OCI-LY7 (cell line): ENCODE measurements at regions of chr13 and their contacts with region 1.

Region 1: GRCh38 chr13:102845630-102846260 is at the start of gene ERCC5:
- DNase-seq: peak; percentile 90
- H3K4me3 ChIP-seq: peak within 1 kb of the TSS; percentile 99
- H3K27ac ChIP-seq: peak within 1 kb of the TSS; percentile 89
- H3K4me1 ChIP-seq: peaks cover 15% of the 10 kb centered on the region
- CTCF ChIP-seq: no peak
- total RNA-seq, gene ERCC5: 37.9 and 39.2 TPM in 2 replicates

Region 2: DNA sequence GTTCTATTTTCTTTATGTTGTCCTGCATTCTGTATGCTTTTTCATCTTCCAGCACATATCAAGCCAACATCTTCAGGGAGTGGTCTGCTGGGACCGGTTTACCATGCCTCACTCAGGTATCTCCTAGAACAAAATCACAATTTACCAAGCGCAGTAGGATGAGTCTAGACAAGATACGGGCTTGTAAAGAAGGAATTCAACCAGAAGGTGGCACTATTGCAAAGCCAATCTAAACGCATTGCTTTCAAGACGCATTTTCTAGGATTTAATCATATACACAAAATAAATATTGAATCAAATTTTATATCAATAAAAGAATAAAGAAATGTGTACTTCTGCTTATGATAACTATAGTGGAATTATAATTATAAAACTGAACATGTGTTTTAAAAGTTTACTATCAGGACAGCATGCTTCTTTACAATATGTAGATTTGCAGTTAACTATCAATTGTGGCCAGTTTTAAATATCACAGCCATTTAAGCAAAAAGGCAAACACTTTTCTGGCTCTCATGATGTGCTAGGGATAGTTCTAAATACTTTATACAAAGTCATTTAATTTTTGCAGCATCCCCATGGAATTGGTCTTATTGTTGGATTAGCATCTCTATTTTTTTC is 265.1 kb before region 1 on chr13:
- CTCF ChIA-PET with region 1: no interaction called
- POLR2A ChIA-PET with region 1: interaction called, 4 read pairs
- intact Hi-C with region 1: loop called (anchors 1 kb)
- DNase-seq: peak; percentile 59
- H3K4me3 ChIP-seq: no peak overlapping the region
- H3K27ac ChIP-seq: no peak overlapping the region
- H3K4me1 ChIP-seq: peaks cover 7% of the 10 kb centered on the region
- CTCF ChIP-seq: peak; percentile 81

Region 3: DNA sequence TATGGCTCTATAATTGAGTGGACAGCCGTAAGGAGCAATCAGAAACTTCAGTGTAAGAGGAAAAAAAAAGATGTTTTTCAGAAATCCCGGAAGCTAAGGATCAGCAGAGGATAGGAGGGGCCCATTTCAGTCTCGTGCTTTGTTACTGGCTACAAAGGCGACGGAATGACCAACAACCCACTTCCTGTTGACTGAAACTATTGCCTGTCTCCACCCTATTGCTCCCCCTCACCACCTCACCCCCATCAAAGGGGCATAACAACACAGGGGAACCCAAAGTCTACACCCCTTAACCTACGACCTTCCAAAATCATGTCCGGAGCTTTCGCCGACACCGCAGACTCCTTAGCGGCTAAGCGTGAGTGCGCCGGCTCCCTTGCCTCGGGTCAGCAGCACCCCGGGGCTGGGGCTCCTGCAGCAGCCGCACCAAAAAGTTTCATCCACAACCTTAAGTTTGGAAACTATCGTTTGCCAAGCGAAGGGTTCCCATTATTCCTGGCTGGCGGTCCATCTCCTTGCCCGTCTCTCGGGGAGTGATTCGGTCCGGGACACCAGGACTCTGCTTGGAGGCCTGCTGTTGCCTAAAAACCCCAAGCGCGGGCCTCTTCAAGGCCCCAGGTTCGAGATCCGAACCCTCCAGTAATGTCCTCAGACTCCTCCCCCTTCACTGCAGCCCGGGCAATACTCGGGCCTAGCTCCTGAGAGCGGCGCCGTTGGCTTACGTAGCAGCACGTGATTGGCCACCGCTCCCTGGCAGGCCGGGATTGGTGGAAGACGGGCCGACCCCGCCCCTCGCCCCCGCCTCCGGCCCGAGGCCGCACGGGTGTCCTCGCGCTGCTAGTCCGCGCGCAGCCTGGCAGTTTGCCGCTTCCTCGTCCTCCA is 249.4 kb before region 1 on chr13 and contains the start of gene TPP2:
- CTCF ChIA-PET with region 1: no interaction called
- POLR2A ChIA-PET with region 1: interaction called, 6 read pairs
- intact Hi-C with region 1: loop called (anchors 1 kb)
- DNase-seq: peak; percentile 93
- H3K4me3 ChIP-seq: peak within 1 kb of the TSS; percentile 86
- H3K27ac ChIP-seq: peak within 1 kb of the TSS; percentile 91
- H3K4me1 ChIP-seq: peaks cover 24% of the 10 kb centered on the region
- CTCF ChIP-seq: no peak
- total RNA-seq, gene TPP2: 31.1 and 31.4 TPM in 2 replicates

Region 4: GRCh38 chr13:102773441-102774215 is 72.1 kb before region 1 on chr13 and contains the start of gene TEX30:
- CTCF ChIA-PET with region 1: no interaction called
- POLR2A ChIA-PET with region 1: no interaction called
- intact Hi-C with region 1: loop called (anchors 5 kb)
- DNase-seq: peak; percentile 78
- H3K4me3 ChIP-seq: peak within 1 kb of the TSS; percentile 78
- H3K27ac ChIP-seq: no peak within 1 kb of the TSS
- H3K4me1 ChIP-seq: peaks cover 6% of the 10 kb centered on the region
- CTCF ChIP-seq: no peak
- total RNA-seq, gene TEX30: 6.7 and 14.2 TPM in 2 replicates

Region 5: DNA sequence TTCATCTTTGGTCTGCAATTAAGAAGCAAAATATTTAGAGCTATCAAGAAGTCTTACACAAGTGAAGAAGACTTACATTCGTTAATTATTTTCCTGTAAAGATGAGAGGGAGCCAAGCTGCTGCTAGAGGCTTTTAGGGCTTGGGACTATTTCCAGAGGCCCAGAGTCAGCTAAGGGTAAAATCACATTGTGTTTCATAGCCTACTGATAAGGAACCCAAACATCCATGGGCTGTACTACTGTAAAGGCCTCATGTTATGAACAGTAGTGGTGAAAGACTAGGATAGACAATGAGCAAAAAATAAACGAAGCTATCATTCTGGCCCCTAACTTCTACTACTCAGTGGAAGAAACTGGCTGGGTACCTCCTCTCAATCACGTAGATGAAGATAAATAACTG is 61.2 kb before region 1 on chr13:
- CTCF ChIA-PET with region 1: no interaction called
- POLR2A ChIA-PET with region 1: no interaction called
- intact Hi-C with region 1: no loop called
- DNase-seq: no peak
- H3K4me3 ChIP-seq: no peak overlapping the region
- H3K27ac ChIP-seq: no peak overlapping the region
- H3K4me1 ChIP-seq: no peaks in the 10 kb centered on the region
- CTCF ChIP-seq: no peak

Region 6: GRCh38 chr13:102830646-102831045 is 15.1 kb before region 1 on chr13:
- CTCF ChIA-PET with region 1: no interaction called
- POLR2A ChIA-PET with region 1: no interaction called
- intact Hi-C with region 1: no loop called
- DNase-seq: no peak
- H3K4me3 ChIP-seq: no peak overlapping the region
- H3K27ac ChIP-seq: no peak overlapping the region
- H3K4me1 ChIP-seq: no peaks in the 10 kb centered on the region
- CTCF ChIP-seq: no peak

Region 7: DNA sequence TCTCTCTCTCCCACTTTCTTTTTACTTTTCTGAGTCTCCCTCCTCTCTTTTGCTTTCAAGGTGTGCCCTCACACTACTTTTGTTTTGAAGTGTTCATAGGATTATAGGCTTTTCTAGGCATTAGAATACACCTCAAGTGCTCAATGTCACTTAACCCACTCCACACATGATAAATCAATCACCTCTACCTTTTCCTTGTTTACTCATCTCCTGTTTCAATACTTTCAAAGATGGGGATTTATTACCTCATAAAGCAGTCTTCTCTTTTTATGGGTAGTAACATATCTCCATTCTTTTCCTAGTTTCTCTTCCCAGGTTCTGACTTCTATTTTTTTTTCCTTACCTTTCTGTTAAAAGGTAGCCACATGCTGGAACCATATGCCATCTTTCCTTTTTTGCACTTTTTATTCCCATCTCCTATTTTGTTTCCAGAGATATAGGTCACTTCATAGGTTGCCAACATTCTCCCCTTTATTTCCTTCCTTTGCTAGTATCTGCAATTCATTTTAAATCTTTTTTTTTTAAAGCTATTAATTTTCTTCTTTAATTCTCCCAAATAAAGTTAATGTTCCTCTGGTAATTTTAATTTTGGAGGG is 358.1 kb after region 1 on chr13:
- CTCF ChIA-PET with region 1: no interaction called
- POLR2A ChIA-PET with region 1: no interaction called
- intact Hi-C with region 1: no loop called
- DNase-seq: no peak
- H3K4me3 ChIP-seq: no peak overlapping the region
- H3K27ac ChIP-seq: no peak overlapping the region
- H3K4me1 ChIP-seq: no peaks in the 10 kb centered on the region
- CTCF ChIP-seq: no peak

Region 8: DNA sequence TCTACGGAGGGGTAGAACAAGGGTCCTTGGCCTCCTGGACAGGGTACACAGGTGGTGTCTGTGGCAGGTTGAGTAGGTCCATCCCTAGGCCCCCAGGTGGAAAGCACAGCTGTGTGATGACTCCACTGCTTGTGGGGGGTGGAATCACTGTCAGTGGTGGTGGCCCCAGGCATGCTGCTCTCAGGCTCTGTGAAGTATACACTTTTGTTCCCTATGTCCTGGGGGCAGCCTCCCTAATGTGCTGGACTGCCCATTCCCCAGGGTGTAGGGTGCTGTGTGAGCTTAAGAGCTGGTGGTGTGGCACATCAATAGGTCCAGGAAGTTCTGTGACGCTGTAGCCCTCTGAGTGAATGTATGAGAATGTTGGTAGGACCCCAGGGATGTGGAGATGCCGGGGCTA is 417.7 kb after region 1 on chr13:
- CTCF ChIA-PET with region 1: no interaction called
- POLR2A ChIA-PET with region 1: no interaction called
- intact Hi-C with region 1: no loop called
- DNase-seq: no peak
- H3K4me3 ChIP-seq: no peak overlapping the region
- H3K27ac ChIP-seq: no peak overlapping the region
- H3K4me1 ChIP-seq: no peaks in the 10 kb centered on the region
- CTCF ChIP-seq: no peak